Calu3 (cell line): ENCODE measurements at regions of chr6 and their contacts with region 1.

Region 1: GRCh38 chr6:38404900-38405556 is 234.7 kb downstream of the BTBD9 start:
- DNase-seq: peak; percentile 16
- H3K4me3 Mint-ChIP-seq: no peak overlapping the region
- H3K27ac Mint-ChIP-seq: peak overlapping the region; percentile 27
- H3K4me1 Mint-ChIP-seq: peaks cover 15% of the 10 kb centered on the region
- H3K27me3 Mint-ChIP-seq: no peaks in the 10 kb centered on the region
- CTCF ChIP-seq: no peak

Region 2: DNA sequence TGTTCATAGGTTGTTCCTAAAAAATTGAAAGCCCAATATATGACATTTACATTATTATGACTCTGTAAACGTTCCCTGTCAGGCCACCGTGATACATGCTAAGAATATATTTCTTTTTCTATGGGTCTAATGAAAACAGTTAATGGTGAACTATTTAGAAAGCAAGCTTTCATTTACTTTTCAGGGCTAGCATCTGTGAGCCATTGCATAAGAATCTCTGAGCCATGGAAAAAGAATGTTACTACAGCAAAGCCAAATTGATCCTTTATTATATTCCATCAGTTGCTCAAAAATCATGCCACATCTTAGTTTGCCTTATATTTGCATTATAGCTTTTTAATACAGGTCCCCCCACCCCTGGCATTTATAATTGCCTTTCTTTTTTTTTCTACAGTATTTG is 310.0 kb before region 1 on chr6:
- CTCF ChIA-PET with region 1: no interaction called
- intact Hi-C with region 1: loop called (anchors 10 kb)
- DNase-seq: no peak
- H3K4me3 Mint-ChIP-seq: no peak overlapping the region
- H3K27ac Mint-ChIP-seq: no peak overlapping the region
- H3K4me1 Mint-ChIP-seq: peaks cover 11% of the 10 kb centered on the region
- H3K27me3 Mint-ChIP-seq: no peaks in the 10 kb centered on the region
- CTCF ChIP-seq: no peak

Region 3: DNA sequence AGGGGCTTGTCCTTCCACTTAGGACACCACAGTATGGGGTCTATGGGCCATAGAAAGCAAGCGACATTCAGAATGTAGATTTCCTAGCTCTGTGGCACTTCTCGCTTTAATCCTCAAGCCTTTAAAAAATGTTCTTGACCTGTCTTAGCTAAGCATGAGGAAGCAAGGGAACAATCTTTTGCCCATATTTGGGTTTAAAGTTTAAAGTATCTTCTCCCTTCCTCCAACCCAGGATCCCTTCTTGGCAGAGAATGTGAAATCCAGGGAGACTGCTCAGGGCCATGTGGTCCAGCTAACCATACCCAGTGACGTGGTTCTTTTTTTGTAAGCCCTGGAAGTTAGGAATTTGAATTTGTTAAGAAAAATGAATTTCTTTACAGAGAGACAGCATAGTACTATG is 55.2 kb before region 1 on chr6:
- CTCF ChIA-PET with region 1: no interaction called
- intact Hi-C with region 1: loop called (anchors 2 kb)
- DNase-seq: no peak
- H3K4me3 Mint-ChIP-seq: no peak overlapping the region
- H3K27ac Mint-ChIP-seq: no peak overlapping the region
- H3K4me1 Mint-ChIP-seq: no peaks in the 10 kb centered on the region
- H3K27me3 Mint-ChIP-seq: no peaks in the 10 kb centered on the region
- CTCF ChIP-seq: no peak

Region 4: DNA sequence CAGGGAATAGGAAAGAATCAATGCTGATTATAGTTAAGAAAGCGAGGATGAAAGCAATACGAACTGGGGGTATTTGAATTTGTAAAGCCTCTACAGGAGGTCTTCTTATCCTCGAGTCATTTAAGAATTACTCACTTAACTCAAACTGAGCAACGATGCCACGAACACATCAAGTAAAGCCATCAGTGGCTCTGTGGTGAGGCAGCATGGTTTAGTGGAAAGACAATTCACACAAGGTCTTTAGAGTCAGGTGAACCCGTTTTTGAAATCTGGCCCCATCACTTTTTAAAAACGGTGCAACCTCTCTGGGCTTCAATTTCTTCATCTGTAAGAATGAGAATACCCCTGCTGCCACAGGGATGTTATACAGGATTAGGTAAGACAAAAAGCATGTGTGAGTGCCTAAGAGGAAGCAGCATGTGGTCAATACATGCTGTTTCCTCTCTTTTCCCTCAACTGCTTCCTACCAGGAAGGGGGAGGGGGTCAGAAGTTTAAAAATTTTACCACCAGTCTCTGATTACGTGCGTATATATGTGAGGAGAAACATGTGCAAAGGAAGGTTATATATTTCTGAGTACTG is 72.7 kb after region 1 on chr6:
- CTCF ChIA-PET with region 1: no interaction called
- intact Hi-C with region 1: no loop called
- DNase-seq: no peak
- H3K4me3 Mint-ChIP-seq: no peak overlapping the region
- H3K27ac Mint-ChIP-seq: no peak overlapping the region
- H3K4me1 Mint-ChIP-seq: no peaks in the 10 kb centered on the region
- H3K27me3 Mint-ChIP-seq: no peaks in the 10 kb centered on the region
- CTCF ChIP-seq: no peak

Region 5: GRCh38 chr6:38713812-38714211 is 308.8 kb after region 1 on chr6:
- CTCF ChIA-PET with region 1: no interaction called
- intact Hi-C with region 1: no loop called
- DNase-seq: no peak
- H3K4me3 Mint-ChIP-seq: no peak overlapping the region
- H3K27ac Mint-ChIP-seq: no peak overlapping the region
- H3K4me1 Mint-ChIP-seq: no peaks in the 10 kb centered on the region
- H3K27me3 Mint-ChIP-seq: peaks cover 29% of the 10 kb centered on the region
- CTCF ChIP-seq: no peak